CD4-positive, alpha-beta T cell (primary cell): ENCODE measurements at regions of chr1 and their contacts with region 1.

Region 1: DNA sequence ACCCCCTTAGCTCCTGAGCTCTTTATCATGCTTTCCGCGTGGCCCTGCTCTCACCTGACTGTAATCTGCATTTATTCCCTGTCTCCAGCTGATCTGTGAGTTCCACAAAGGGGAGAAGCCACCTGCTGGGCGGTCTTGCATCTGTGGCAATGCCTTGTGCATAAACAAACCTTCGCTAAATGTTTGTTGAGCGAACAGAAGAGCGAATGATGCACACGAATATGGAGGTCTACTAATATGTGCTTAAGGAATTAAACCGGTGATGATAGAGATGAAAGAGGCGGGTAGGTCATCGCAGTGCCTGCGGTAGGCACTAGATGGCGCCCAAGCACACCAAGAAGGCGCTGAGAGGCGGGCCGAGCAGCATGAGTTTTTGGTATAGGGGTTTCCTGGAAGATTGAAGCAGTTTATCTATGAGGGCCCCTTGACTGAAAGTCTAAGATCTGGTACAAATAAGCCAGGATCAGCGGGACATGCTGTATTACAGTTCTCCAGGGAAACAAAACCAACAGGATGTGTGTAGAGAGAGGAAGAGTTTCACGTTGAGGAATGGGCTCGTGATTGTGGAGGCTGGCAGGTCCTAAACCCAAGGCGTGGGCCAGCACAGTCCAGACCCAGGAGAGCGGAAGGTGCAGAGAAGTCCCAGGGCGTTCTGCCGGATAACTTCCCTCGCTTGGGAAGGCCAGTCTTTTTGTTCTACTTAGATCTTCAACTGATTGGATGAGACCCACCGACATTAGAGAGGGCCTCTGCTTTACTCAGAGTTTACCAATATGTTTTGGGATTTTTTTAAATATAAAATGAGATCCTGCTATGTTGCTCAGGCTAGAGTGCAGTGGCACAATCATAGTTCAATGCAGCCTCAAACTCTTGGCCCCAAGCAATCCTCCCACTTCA is 34.7 kb downstream of the TOMM20 start:
- DNase-seq: peak; percentile 75 to 90 (median 82)
- ATAC-seq: peak; percentile 100
- H3K4me3 ChIP-seq: no peak overlapping the region
- H3K4me3 Mint-ChIP-seq: no peak overlapping the region
- H3K27ac ChIP-seq: no peak overlapping the region
- H3K27ac Mint-ChIP-seq: no peak overlapping the region
- H3K4me1 ChIP-seq: peaks cover 9% of the 10 kb centered on the region
- H3K4me1 Mint-ChIP-seq: peaks cover 6% of the 10 kb centered on the region
- H3K27me3 ChIP-seq: no peaks in the 10 kb centered on the region
- H3K27me3 Mint-ChIP-seq: peaks cover 6% of the 10 kb centered on the region
- CTCF ChIP-seq: peak; percentile 94

Region 2: GRCh38 chr1:235783148-235783776 is 689.3 kb after region 1 on chr1:
- CTCF ChIA-PET with region 1: no interaction called
- POLR2A ChIA-PET with region 1: no interaction called
- intact Hi-C with region 1: loop called in 1 of 2 experiments (anchors 5 kb)
- DNase-seq: peak in 3 of 14 experiments; percentile 19 to 39 (median 38)
- ATAC-seq: no peak
- H3K4me3 ChIP-seq: no peak overlapping the region
- H3K4me3 Mint-ChIP-seq: no peak overlapping the region
- H3K27ac ChIP-seq: no peak overlapping the region
- H3K27ac Mint-ChIP-seq: no peak overlapping the region
- H3K4me1 ChIP-seq: no peaks in the 10 kb centered on the region
- H3K4me1 Mint-ChIP-seq: no peaks in the 10 kb centered on the region
- H3K27me3 ChIP-seq: no peaks in the 10 kb centered on the region
- H3K27me3 Mint-ChIP-seq: no peaks in the 10 kb centered on the region
- CTCF ChIP-seq: peak; percentile 75